ENCODE measurements at regions of chr9 and their contacts with region 1.

Region 1: GRCh38 chr9:71295928-71296327 is 174.5 kb upstream of the TRPM3 start:
- DNase-seq: no peak
- H3K4me3 ChIP-seq: no peak overlapping the region
- H3K27ac ChIP-seq: no peak overlapping the region
- H3K4me1 ChIP-seq: no peaks in the 10 kb centered on the region
- H3K27me3 ChIP-seq: no peaks in the 10 kb centered on the region
- CTCF ChIP-seq: no peak
- EP300 ChIP-seq: no peak
- RAD21 ChIP-seq: no peak

Region 2: DNA sequence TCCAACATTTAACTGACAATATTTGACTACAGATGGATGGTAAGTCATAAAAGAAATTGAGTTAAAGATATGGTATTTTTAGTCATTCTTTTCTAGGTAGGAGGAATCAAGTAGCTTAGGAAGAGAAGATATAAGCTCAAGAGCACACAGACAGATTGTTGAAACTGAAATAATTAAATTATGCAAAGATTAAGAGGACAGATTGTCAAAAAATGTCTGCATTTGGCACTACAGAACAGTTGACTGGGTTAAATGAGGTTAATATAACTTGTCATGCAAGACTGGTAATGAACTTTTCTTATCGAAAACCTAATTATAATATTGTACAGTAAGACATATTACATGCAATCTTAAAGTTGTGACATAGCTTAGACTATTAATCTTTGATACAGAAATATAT is 138.2 kb before region 1 on chr9:
- CTCF ChIA-PET with region 1: no interaction called
- POLR2A ChIA-PET with region 1: no interaction called
- DNase-seq: no peak
- H3K4me3 ChIP-seq: no peak overlapping the region
- H3K27ac ChIP-seq: no peak overlapping the region
- H3K4me1 ChIP-seq: no peaks in the 10 kb centered on the region
- H3K27me3 ChIP-seq: no peaks in the 10 kb centered on the region
- CTCF ChIP-seq: no peak
- EP300 ChIP-seq: no peak
- RAD21 ChIP-seq: no peak

Region 3: GRCh38 chr9:71285191-71285656 is 10.7 kb before region 1 on chr9:
- CTCF ChIA-PET with region 1: interaction called, 18 read pairs
- POLR2A ChIA-PET with region 1: no interaction called
- DNase-seq: peak; percentile 32
- H3K4me3 ChIP-seq: no peak overlapping the region; a peak in 1 of 4 replicates
- H3K27ac ChIP-seq: no peak overlapping the region
- H3K4me1 ChIP-seq: no peaks in the 10 kb centered on the region
- H3K27me3 ChIP-seq: peaks cover 5% of the 10 kb centered on the region; the same call in 1 of the 2 replicates
- CTCF ChIP-seq: peak; percentile 92
- EP300 ChIP-seq: no peak
- RAD21 ChIP-seq: peak; percentile 78

Region 4: GRCh38 chr9:71306134-71306533 is 10.2 kb after region 1 on chr9:
- CTCF ChIA-PET with region 1: no interaction called
- POLR2A ChIA-PET with region 1: no interaction called
- DNase-seq: no peak
- H3K4me3 ChIP-seq: no peak overlapping the region
- H3K27ac ChIP-seq: no peak overlapping the region
- H3K4me1 ChIP-seq: no peaks in the 10 kb centered on the region
- H3K27me3 ChIP-seq: peaks cover 5% of the 10 kb centered on the region; the same call in 1 of the 2 replicates
- CTCF ChIP-seq: no peak
- EP300 ChIP-seq: no peak
- RAD21 ChIP-seq: no peak